Calu3 (cell line): ENCODE measurements at regions of chr1 and their contacts with region 1.

Region 1: DNA sequence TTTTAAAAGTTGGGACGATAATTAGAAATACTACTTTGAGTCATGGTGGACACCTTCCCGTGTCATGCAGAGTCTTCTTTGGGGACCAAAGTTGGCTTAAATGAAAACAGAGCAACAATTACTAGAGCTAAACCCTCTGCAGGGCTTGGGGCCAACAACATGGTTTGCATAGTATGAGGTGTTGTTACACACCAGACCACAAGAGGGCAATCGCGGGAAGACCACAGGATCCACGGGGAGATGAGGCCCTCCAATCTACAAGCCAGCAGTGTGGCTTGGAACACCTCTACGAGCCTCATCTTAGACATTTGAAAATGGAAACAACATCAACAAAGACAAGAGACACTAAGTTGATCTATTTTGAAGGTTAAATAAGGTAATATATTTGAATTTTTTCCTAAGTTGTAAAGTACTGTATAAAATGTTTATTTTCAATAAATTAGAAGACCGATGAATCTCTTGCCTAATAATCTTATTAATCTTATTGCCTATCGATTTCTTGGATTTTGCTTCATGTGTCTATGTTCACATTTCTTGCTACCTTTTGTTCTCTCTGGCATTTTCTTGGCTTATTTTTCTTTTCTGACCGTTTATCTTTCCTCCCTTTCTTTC is 8.2 kb upstream of the SMCP start:
- DNase-seq: peak; percentile 86
- H3K4me3 Mint-ChIP-seq: no peak overlapping the region
- H3K27ac Mint-ChIP-seq: no peak overlapping the region
- H3K4me1 Mint-ChIP-seq: no peaks in the 10 kb centered on the region
- H3K27me3 Mint-ChIP-seq: no peaks in the 10 kb centered on the region
- CTCF ChIP-seq: peak; percentile 90

Region 2: GRCh38 chr1:152654110-152654509 is 215.8 kb before region 1 on chr1:
- CTCF ChIA-PET with region 1: interaction called, 3 read pairs
- intact Hi-C with region 1: loop called (anchors 2 kb)
- DNase-seq: peak; percentile 82
- H3K4me3 Mint-ChIP-seq: no peak overlapping the region
- H3K27ac Mint-ChIP-seq: no peak overlapping the region
- H3K4me1 Mint-ChIP-seq: no peaks in the 10 kb centered on the region
- H3K27me3 Mint-ChIP-seq: peaks cover 66% of the 10 kb centered on the region
- CTCF ChIP-seq: peak; percentile 87

Region 3: GRCh38 chr1:152906023-152906565 is 36.2 kb after region 1 on chr1:
- CTCF ChIA-PET with region 1: interaction called, 12 read pairs
- intact Hi-C with region 1: loop called (anchors 2 kb)
- DNase-seq: peak; percentile 71
- H3K4me3 Mint-ChIP-seq: no peak overlapping the region
- H3K27ac Mint-ChIP-seq: peak overlapping the region; percentile 34
- H3K4me1 Mint-ChIP-seq: peaks cover 51% of the 10 kb centered on the region
- H3K27me3 Mint-ChIP-seq: peaks cover 21% of the 10 kb centered on the region
- CTCF ChIP-seq: no peak

Region 4: GRCh38 chr1:153032677-153033308 is 162.9 kb after region 1 on chr1:
- CTCF ChIA-PET with region 1: interaction called, 14 read pairs
- intact Hi-C with region 1: loop called (anchors 2 kb)
- DNase-seq: peak; percentile 80
- H3K4me3 Mint-ChIP-seq: no peak overlapping the region
- H3K27ac Mint-ChIP-seq: peak overlapping the region; percentile 53
- H3K4me1 Mint-ChIP-seq: peaks cover 25% of the 10 kb centered on the region
- H3K27me3 Mint-ChIP-seq: no peaks in the 10 kb centered on the region
- CTCF ChIP-seq: peak; percentile 67

Region 5: DNA sequence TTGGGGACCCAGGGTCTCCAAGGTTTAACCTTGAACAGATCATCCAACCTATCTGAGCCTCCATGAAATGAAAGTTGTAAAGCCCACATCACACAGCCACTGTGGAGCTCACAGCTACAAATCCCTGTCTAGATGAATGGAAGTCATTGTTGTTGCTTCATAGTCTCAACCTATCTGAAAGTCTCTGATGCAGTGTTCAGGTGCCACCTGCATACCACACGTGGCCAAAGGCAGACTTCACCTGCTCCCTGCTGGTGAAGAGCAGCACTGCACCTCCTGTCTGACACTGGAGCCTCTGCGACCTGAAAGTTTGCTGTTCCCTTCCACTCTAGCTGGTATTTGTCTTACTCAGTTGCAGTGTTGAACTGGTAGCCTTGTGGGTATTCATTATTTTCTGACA is 407.9 kb after region 1 on chr1:
- CTCF ChIA-PET with region 1: no interaction called
- intact Hi-C with region 1: loop called (anchors 2 kb)
- DNase-seq: peak; percentile 75
- H3K4me3 Mint-ChIP-seq: no peak overlapping the region
- H3K27ac Mint-ChIP-seq: no peak overlapping the region
- H3K4me1 Mint-ChIP-seq: no peaks in the 10 kb centered on the region
- H3K27me3 Mint-ChIP-seq: peaks cover 31% of the 10 kb centered on the region
- CTCF ChIP-seq: peak; percentile 86